Activated T-helper 2 cell treated with anti-CD3 and anti-CD28 coated beads, Interferon-gamma antibody, Interleukin-2, Interleukin-4, amounts not matched to agents 10 μg/mL and 5 μg/mL and 100 μg/mL, durations not matched to agents 14 hours and 24 hours and 36 hours (primary cell): ENCODE measurements at regions of chr6 and their contacts with region 1.

Region 1: GRCh38 chr6:35452186-35453090 is at the start of gene FANCE:
- DNase-seq: peak; percentile 91
- H3K4me3 Mint-ChIP-seq: peak within 1 kb of the TSS; percentile 84
- H3K27ac Mint-ChIP-seq: peak within 1 kb of the TSS; percentile 63
- H3K4me1 Mint-ChIP-seq: peaks cover 38% of the 10 kb centered on the region
- H3K27me3 Mint-ChIP-seq: peaks cover 10% of the 10 kb centered on the region
- total RNA-seq, gene FANCE: 20.6 and 21.1 TPM in 2 replicates

Region 2: DNA sequence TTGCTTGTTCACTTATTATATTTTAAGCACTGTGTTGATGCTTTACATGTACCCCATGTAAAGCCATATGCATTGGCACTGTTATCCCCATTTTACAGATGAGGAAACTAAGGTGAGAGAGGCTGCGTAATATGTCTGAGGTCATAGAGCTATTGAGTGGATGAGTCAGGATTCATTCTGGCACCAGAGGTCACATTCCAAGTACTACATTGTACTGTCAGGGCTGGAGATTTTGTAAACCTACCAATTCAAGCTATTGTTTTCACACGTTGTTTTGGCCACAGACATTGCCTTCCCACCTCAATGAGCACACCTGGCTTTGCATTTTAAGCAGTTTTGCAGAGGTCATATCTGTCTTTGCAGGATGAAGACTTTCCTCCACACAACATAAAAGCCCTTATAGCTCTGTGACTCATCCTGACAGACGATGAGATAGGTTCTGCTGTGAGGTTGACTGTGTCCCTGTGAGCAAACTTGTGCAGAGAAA is 530.2 kb before region 1 on chr6:
- intact Hi-C with region 1: no loop called
- DNase-seq: no peak
- H3K4me3 Mint-ChIP-seq: no peak overlapping the region
- H3K27ac Mint-ChIP-seq: no peak overlapping the region
- H3K4me1 Mint-ChIP-seq: peaks cover 2% of the 10 kb centered on the region
- H3K27me3 Mint-ChIP-seq: peaks cover 11% of the 10 kb centered on the region

Region 3: GRCh38 chr6:35342258-35343091 is 110.0 kb before region 1 on chr6 and contains the start of gene PPARD:
- intact Hi-C with region 1: loop called (anchors 1 kb)
- DNase-seq: peak; percentile 96
- H3K4me3 Mint-ChIP-seq: peak within 1 kb of the TSS; percentile 98
- H3K27ac Mint-ChIP-seq: peak within 1 kb of the TSS; percentile 87
- H3K4me1 Mint-ChIP-seq: peaks cover 35% of the 10 kb centered on the region
- H3K27me3 Mint-ChIP-seq: no peaks in the 10 kb centered on the region
- total RNA-seq, gene PPARD: 27.1 and 29.1 TPM in 2 replicates

Region 4: GRCh38 chr6:35391240-35391968 is 61.0 kb before region 1 on chr6:
- intact Hi-C with region 1: loop called (anchors 5 kb)
- DNase-seq: no peak
- H3K4me3 Mint-ChIP-seq: no peak overlapping the region
- H3K27ac Mint-ChIP-seq: peak overlapping the region; percentile 65
- H3K4me1 Mint-ChIP-seq: peaks cover 33% of the 10 kb centered on the region
- H3K27me3 Mint-ChIP-seq: no peaks in the 10 kb centered on the region

Region 5: DNA sequence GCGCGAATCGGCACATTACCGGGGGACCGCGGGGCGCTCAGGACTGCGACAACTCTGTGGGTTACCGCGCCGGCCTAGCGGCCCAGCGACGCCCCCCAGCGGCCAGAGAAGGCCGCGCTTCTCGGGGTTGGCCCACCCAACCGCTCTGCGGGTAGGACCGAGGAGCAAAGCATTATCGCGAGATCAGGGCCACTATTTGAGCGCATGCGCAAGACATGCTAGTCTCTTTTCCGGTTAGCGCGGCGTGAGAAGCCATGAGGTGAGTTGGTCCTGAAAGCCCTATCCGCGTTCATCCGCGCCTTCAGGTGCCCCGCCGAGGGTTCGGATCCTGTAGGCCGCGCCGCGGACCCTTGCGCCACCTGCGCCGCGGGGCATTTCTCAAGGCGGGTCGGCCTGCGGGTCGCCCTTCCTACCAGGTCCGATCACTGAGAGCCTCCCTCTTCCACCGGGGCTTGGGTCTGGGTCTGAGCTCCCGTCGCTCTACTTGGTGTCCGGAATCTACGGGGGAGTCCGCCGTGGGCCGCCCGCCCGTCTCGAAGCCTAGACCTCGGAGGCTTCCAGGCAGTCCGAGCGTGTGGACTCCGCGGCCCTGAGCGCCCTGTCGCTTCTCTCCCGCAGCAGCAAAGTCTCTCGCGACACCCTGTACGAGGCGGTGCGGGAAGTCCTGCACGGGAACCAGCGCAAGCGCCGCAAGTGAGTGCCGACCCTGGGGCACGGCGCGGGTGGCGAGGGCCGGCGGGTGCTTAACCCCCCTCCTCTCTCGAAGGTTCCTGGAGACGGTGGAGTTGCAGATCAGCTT is 15.9 kb after region 1 on chr6 and contains the start of gene RPL10A:
- intact Hi-C with region 1: loop called (anchors 1 kb)
- DNase-seq: peak; percentile 94
- H3K4me3 Mint-ChIP-seq: peak within 1 kb of the TSS; percentile 91
- H3K27ac Mint-ChIP-seq: peak within 1 kb of the TSS; percentile 98
- H3K4me1 Mint-ChIP-seq: peaks cover 24% of the 10 kb centered on the region
- H3K27me3 Mint-ChIP-seq: no peaks in the 10 kb centered on the region
- total RNA-seq, gene RPL10A: 1,727 and 1,773 TPM in 2 replicates